ENCODE measurements at regions of chr13 and their contacts with region 1.

Region 1: DNA sequence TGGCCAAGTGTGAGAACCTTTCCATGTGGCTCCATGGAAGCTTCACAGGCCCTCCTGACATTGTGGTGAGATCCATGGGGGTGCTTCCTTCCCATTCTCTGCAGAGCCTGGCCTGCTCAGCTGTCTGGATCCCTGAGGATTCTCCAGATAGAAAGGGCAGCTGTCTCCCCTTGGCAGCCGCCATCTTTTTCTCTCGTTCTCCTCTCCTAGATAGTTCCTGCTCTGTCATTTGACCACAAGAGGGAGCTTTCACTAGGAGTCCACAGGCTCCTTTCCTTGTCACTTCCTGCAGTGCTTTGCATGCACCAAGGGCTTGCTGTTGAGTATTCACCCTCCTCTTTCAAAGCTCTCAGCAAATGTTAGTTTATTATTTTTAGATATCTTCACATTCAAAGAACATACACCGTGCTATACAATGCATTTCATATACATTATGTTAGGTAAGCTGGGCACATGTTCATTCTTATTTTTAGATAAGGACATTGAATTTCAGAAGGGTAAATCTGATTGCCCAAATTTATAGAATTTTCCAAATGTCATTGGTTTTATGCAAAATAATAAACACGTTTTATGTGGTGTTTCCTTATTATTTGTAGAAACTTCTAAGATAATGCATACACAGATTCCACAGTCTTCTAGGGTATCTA is 133.2 kb downstream of the FRY start:
- DNase-seq: peak; percentile 21 to 30 (median 25)
- H3K4me3 ChIP-seq: no peak overlapping the region
- H3K4me3 Mint-ChIP-seq: no peak overlapping the region
- H3K27ac ChIP-seq: no peak overlapping the region
- H3K27ac Mint-ChIP-seq: no peak overlapping the region
- H3K4me1 ChIP-seq: no peaks in the 10 kb centered on the region
- H3K4me1 Mint-ChIP-seq: peaks cover 0 to 5% (median 1%) of the 10 kb centered on the region in 4 donors
- H3K27me3 ChIP-seq: no peaks in the 10 kb centered on the region
- H3K27me3 Mint-ChIP-seq: no peaks in the 10 kb centered on the region

Region 2: DNA sequence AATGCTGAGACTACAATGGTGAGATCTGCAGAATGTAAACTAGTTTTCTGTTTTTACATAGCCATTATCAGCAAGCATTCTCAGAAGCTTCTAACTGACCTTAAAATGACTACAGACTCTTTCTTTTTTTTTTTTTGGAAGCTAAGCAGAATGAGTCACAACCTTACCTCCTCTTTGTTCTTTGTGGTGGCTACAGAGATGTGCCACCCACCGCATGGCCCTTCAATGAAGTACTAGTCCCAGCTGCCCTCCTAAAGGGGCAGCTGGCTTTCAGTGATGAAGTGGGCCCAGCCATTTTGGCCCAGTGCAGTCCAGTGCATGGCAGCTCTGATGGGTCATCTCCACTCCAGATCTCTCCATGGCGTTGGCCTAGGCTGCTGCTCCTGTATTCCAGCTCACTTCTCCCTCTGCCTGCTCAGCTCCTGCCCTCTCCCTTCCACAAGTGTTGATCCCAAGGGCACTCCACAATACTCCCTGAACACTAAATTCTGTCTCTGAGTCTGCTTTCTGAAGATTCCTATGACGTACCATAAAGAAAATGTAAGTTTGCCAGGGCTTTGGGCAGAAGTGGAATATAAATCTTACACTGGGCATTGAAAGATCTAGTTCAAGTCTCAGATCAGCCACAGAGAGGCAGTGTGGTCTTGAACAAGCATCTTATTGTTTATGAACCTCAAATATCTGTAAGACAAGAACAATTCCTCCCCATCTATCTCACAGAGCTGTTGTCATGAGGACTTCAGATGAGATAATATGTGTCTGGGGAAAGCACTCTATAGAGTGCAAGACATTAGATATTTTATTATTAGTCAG is 339.8 kb before region 1 on chr13:
- CTCF ChIA-PET with region 1: interaction called, 5 read pairs
- POLR2A ChIA-PET with region 1: no interaction called
- intact Hi-C with region 1: loop called (anchors 2 kb)
- DNase-seq: peak in 4 of 5 donors; percentile 21 to 30 (median 26)
- H3K4me3 ChIP-seq: no peak overlapping the region
- H3K4me3 Mint-ChIP-seq: peak overlapping the region in 2 of 8 donors; percentile 17 to 46
- H3K27ac ChIP-seq: no peak overlapping the region
- H3K27ac Mint-ChIP-seq: peak overlapping the region in 5 of 7 donors; percentile 4 to 91 (median 52)
- H3K4me1 ChIP-seq: peaks cover 5% of the 10 kb centered on the region
- H3K4me1 Mint-ChIP-seq: peaks cover 4 to 13% (median 7%) of the 10 kb centered on the region in 4 donors
- H3K27me3 ChIP-seq: no peaks in the 10 kb centered on the region
- H3K27me3 Mint-ChIP-seq: no peaks in the 10 kb centered on the region

Region 3: GRCh38 chr13:32019612-32020233 is 145.0 kb before region 1 on chr13:
- CTCF ChIA-PET with region 1: interaction called, 5 read pairs
- POLR2A ChIA-PET with region 1: no interaction called
- intact Hi-C with region 1: loop called (anchors 1 kb)
- DNase-seq: peak in 2 of 5 donors; percentile 10 to 15
- H3K4me3 ChIP-seq: no peak overlapping the region
- H3K4me3 Mint-ChIP-seq: no peak overlapping the region
- H3K27ac ChIP-seq: no peak overlapping the region
- H3K27ac Mint-ChIP-seq: peak overlapping the region in 2 of 7 donors; percentile 2 to 49
- H3K4me1 ChIP-seq: no peaks in the 10 kb centered on the region
- H3K4me1 Mint-ChIP-seq: no peaks in the 10 kb centered on the region
- H3K27me3 ChIP-seq: no peaks in the 10 kb centered on the region
- H3K27me3 Mint-ChIP-seq: no peaks in the 10 kb centered on the region

Region 4: DNA sequence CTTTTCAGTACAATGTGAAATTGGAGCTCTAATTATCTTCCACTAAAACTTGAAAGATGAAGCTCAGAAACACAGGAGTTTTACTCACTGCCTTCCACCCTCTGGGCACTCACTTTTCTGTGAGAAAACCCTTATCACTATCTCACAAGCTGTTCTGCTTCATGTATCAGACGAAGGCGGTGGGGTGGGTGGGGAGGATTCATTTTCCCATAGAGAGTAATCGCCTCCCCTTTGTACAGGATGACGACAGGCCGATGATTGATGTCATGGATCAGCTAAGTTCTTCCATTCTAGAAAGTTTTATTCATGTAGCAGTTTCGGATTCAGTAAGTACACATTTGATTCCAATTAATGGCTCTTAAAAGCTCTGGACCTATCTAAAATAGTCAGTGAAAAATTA is 10.6 kb after region 1 on chr13:
- CTCF ChIA-PET with region 1: interaction called, 21 read pairs
- POLR2A ChIA-PET with region 1: no interaction called
- intact Hi-C with region 1: no loop called
- DNase-seq: no peak
- H3K4me3 ChIP-seq: no peak overlapping the region
- H3K4me3 Mint-ChIP-seq: no peak overlapping the region
- H3K27ac ChIP-seq: no peak overlapping the region
- H3K27ac Mint-ChIP-seq: no peak overlapping the region
- H3K4me1 ChIP-seq: no peaks in the 10 kb centered on the region
- H3K4me1 Mint-ChIP-seq: no peaks in the 10 kb centered on the region
- H3K27me3 ChIP-seq: no peaks in the 10 kb centered on the region
- H3K27me3 Mint-ChIP-seq: no peaks in the 10 kb centered on the region